ENCODE measurements at regions of chr12 and their contacts with region 1.

Region 1: DNA sequence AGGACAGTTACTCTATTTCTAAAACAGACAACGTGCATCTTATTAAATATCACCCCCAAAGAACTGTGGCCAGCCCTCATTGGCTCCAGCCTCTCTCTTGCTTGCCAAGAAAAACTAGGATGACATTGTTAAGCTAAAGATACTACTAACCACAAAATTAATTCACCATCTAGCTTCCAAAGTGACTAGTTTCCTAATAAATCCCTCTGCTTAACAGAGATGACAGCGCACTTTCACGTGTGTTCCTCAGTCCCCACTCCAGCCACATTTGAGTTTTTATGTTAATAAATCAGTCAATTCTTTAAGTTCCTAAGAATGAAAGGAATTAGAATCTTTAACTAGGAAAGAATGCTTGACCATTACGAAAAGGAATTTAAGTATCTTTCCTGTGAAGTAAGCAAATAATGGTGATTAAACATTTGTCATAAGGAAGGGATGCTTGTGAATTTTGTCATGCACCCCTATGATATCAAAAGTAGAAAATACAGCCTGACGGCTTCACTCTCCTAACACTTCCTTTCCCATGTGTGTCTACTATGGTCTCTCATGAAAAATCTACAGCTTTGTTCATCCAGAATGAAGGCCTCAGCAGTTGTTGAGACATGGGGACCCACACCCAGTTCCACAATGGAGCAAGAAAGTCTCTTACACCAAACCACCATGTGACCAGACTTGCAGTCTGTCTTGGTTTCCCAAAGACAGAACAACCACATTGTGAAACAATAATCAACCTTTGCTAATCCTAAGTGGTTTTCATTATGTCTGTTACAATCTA is 8.1 kb downstream of the CORO1C start:
- DNase-seq: no peak
- ATAC-seq: peak; percentile 29 to 66 (median 50)
- H3K4me3 ChIP-seq: no peak overlapping the region
- H3K27ac ChIP-seq: peak overlapping the region in 9 of 10 donors; percentile 33 to 78 (median 60)
- H3K4me1 ChIP-seq: peaks cover 14 to 93% (median 83%) of the 10 kb centered on the region in 9 donors
- H3K27me3 ChIP-seq: no peaks in the 10 kb centered on the region
- CTCF ChIP-seq: no peak

Region 2: DNA sequence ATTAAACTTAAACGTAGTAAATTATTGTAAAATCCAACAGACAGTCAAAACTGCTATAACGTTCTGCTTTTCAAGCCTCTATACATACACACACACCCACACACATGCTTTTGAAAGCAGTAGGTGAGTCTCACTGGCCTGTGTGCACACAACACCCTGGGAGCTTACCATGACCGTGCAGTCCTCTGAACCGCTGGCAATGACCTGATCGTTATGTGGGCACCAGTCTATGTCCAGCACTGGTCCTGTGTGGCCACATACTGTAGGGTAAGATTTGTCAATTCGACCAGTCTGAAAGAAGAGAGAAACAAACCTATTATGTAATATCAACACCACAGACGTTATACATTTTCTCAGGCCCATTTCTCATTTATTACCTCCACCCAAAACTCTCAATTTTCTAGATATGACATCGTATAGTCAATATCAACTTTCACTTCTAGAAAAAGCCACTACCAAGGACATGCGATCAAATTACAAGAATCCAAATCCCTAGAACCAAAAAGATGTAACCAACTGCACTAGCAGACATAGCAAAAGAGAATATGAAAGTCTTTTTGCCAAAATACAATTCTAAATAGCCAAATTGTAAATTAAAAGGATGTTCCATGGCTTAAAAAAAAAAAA is 45.0 kb before region 1 on chr12:
- intact Hi-C with region 1: loop called in 1 of 10 experiments (anchors 10 kb)
- DNase-seq: no peak
- ATAC-seq: peak in 1 of 8 donors; percentile 56
- H3K4me3 ChIP-seq: no peak overlapping the region
- H3K27ac ChIP-seq: peak overlapping the region in 1 of 10 donors; percentile 16
- H3K4me1 ChIP-seq: peaks cover 0 to 50% (median 12%) of the 10 kb centered on the region in 9 donors
- H3K27me3 ChIP-seq: no peaks in the 10 kb centered on the region
- CTCF ChIP-seq: no peak

Region 3: GRCh38 chr12:108784270-108784669 is 61.1 kb after region 1 on chr12:
- intact Hi-C with region 1: loop called in 1 of 10 experiments (anchors 2 kb)
- DNase-seq: no peak
- ATAC-seq: peak in 1 of 8 donors; percentile 13
- H3K4me3 ChIP-seq: no peak overlapping the region
- H3K27ac ChIP-seq: peak overlapping the region in 6 of 10 donors; percentile 0 to 73 (median 52)
- H3K4me1 ChIP-seq: peaks cover 25 to 93% (median 70%) of the 10 kb centered on the region in 9 donors
- H3K27me3 ChIP-seq: no peaks in the 10 kb centered on the region
- CTCF ChIP-seq: no peak